ENCODE measurements at regions of chr20 and their contacts with region 1.

Region 1: GRCh38 chr20:57738481-57738880 is 28.7 kb upstream of the PMEPA1 start:
- DNase-seq: peak; percentile 8
- H3K4me3 ChIP-seq: no peak overlapping the region
- H3K27ac ChIP-seq: no peak overlapping the region
- H3K4me1 ChIP-seq: no peaks in the 10 kb centered on the region
- H3K27me3 ChIP-seq: no peaks in the 10 kb centered on the region
- CTCF ChIP-seq: no peak

Region 2: DNA sequence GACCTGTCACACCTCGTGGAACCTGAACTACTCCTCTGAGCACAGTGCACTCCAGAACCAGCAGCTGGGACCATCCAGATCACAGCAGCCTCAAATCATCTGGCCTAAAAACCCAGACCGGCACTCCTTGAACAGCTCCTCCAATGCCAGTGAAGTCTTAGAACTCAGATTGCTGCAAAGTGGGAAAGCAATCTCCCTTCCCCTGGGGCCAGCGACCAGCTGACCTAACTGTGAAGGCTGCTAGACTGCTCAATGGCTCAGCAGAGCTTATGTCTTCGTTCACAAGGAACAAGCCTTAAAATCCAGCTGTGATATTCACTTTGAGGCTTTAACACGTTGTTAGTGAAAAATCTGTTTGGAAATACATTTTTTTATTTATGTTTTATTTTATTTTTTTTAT is 246.8 kb after region 1 on chr20:
- CTCF ChIA-PET with region 1: no interaction called
- dilution Hi-C with region 1: loop called (anchors 5 kb)
- in situ Hi-C with region 1: no loop called
- intact Hi-C with region 1: no loop called
- DNase-seq: no peak
- H3K4me3 ChIP-seq: no peak overlapping the region
- H3K27ac ChIP-seq: no peak overlapping the region
- H3K4me1 ChIP-seq: peaks cover 19% of the 10 kb centered on the region
- H3K27me3 ChIP-seq: no peaks in the 10 kb centered on the region
- CTCF ChIP-seq: no peak